ENCODE measurements at regions of chr11 and their contacts with region 1.

Region 1: GRCh38 chr11:12281571-12282478 is 95.5 kb upstream of the PARVA start:
- DNase-seq: peak; percentile 96
- H3K4me3 ChIP-seq: no peak overlapping the region
- H3K27ac ChIP-seq: no peak overlapping the region
- H3K4me1 ChIP-seq: no peaks in the 10 kb centered on the region
- H3K27me3 ChIP-seq: no peaks in the 10 kb centered on the region
- CTCF ChIP-seq: peak; percentile 99 to 100 (median 100)
- POLR2A ChIP-seq: no peak

Region 2: GRCh38 chr11:12052676-12053605 is 228.9 kb before region 1 on chr11:
- intact Hi-C with region 1: loop called (anchors 5 kb)
- DNase-seq: no peak
- H3K4me3 ChIP-seq: no peak overlapping the region
- H3K27ac ChIP-seq: no peak overlapping the region
- H3K4me1 ChIP-seq: peaks cover 13% of the 10 kb centered on the region
- H3K27me3 ChIP-seq: no peaks in the 10 kb centered on the region
- CTCF ChIP-seq: no peak
- POLR2A ChIP-seq: no peak

Region 3: GRCh38 chr11:12569499-12570040 is 287.7 kb after region 1 on chr11:
- intact Hi-C with region 1: no loop called
- DNase-seq: no peak
- H3K4me3 ChIP-seq: no peak overlapping the region
- H3K27ac ChIP-seq: no peak overlapping the region
- H3K4me1 ChIP-seq: no peaks in the 10 kb centered on the region
- H3K27me3 ChIP-seq: no peaks in the 10 kb centered on the region
- CTCF ChIP-seq: no peak
- POLR2A ChIP-seq: no peak